Mammary epithelial cell (primary cell): ENCODE measurements at regions of chr9 and their contacts with region 1.

Region 1: DNA sequence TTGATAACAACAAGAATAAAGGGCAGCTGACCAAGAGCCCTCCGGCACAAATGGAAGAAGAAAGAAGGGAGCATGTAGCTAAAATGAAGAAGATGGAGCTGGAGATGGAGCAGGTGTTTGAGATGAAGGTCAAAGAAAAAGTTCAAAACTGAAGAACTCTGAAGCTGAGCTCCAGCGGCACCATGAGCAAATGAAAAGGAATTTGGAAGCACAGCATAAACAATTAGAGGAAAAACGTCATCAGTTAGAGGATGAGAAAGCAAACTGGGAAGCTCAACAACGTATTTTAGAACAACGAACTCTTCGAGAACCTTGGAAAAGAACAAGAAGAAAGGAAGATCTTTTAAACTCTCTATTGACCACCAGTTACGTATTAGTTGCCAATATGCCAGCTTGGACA is 100.9 kb downstream of the GABBR2 start:
- DNase-seq: no peak
- H3K4me3 ChIP-seq: no peak overlapping the region
- H3K27ac ChIP-seq: no peak overlapping the region
- H3K4me1 ChIP-seq: no peaks in the 10 kb centered on the region
- H3K27me3 ChIP-seq: no peaks in the 10 kb centered on the region
- CTCF ChIP-seq: no peak

Region 2: DNA sequence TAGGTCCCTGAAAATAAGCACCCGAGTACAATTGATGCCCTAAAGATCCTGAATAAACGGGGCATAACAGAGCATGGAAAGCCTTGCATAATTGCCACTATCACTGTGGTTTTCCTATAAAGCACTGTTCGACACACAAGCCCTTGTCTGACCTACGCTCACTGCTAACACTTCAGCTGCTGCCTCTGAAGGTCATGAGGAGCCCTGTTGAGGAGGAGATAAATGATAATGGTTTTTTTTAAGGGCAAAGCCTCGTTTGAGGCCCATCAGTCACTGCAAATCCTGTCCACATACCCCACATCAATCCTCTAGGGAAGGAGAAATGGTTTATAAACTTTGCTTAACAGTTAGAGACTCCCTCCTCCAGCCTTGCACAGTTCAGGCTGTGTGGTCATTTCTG is 65.9 kb after region 1 on chr9:
- CTCF ChIA-PET with region 1: no interaction called
- dilution Hi-C with region 1: loop called (anchors 5 kb)
- in situ Hi-C with region 1: no loop called
- intact Hi-C with region 1: no loop called
- DNase-seq: no peak
- H3K4me3 ChIP-seq: no peak overlapping the region
- H3K27ac ChIP-seq: no peak overlapping the region
- H3K4me1 ChIP-seq: no peaks in the 10 kb centered on the region
- H3K27me3 ChIP-seq: no peaks in the 10 kb centered on the region
- CTCF ChIP-seq: no peak